B cell (primary cell): ENCODE measurements at regions of chr6 and their contacts with region 1.

Region 1: DNA sequence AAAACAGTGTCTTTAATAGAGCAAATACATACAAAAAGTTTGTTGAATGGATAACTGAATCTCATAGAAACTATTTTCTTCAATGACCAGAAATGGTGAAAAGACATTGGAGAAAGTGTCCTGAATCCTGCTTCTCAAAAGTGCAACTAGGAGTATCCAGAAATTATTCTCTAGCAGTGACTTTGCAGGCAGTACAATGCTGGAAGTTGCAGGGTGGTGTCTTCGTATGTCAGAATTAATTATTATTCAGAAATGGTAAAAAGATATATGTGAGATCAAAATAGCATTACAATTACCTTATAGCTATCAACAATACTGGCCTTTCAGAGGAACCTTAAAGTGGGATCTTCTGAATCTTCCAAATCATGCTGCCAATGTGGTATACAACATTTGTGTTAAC is 10.0 kb downstream of the FRK start:
- DNase-seq: no peak
- ATAC-seq: no peak
- H3K4me3 ChIP-seq: no peak overlapping the region
- H3K4me3 Mint-ChIP-seq: no peak overlapping the region
- H3K27ac ChIP-seq: no peak overlapping the region
- H3K27ac Mint-ChIP-seq: no peak overlapping the region
- H3K4me1 ChIP-seq: peaks cover 8 to 9% of the 10 kb centered on the region in 2 donors
- H3K4me1 Mint-ChIP-seq: peaks cover 4% of the 10 kb centered on the region
- H3K27me3 ChIP-seq: peaks cover 0 to 3% (median 0%) of the 10 kb centered on the region in 4 experiments
- H3K27me3 Mint-ChIP-seq: peaks cover 6% of the 10 kb centered on the region
- CTCF ChIP-seq: no peak

Region 2: DNA sequence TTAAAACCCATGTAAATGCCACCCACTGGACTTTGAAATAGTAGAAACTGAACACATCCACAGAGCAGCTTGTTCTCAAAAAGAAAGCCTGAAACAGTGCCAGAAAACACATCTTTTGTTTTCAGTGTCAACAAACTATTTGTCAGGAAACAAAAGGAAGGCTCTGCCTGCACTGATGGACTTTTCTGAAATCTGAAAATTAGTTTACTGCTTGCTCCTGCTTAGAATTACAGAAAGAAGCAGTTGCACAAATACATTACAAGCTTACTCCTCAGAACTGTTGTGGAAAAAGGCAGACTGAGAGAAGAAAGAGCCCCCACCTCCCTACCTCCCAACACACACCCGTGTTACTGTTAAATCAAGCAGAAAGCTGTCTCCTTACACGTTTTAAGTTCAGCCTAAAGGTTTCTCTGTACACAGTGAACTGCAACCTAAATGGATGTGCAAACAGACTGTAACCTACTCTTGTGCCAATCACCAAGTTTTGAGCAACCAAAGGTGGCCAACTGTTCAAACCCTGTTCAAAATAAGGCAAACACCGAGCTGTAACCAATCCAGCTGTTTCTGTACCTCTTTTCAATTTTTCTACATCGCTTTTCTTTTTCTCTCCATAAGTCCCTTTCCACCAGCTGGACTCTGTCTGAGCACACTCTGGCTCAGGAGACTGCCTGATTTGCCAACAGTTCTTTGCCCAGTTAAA is 33.7 kb before region 1 on chr6:
- CTCF ChIA-PET with region 1: no interaction called
- POLR2A ChIA-PET with region 1: no interaction called
- intact Hi-C with region 1: loop called (anchors 5 kb)
- DNase-seq: peak; percentile 17
- ATAC-seq: no peak
- H3K4me3 ChIP-seq: no peak overlapping the region
- H3K4me3 Mint-ChIP-seq: peak overlapping the region; percentile 32
- H3K27ac ChIP-seq: no peak overlapping the region
- H3K27ac Mint-ChIP-seq: peak overlapping the region; percentile 57
- H3K4me1 ChIP-seq: peaks cover 35 to 46% of the 10 kb centered on the region in 2 donors
- H3K4me1 Mint-ChIP-seq: peaks cover 51% of the 10 kb centered on the region
- H3K27me3 ChIP-seq: no peaks in the 10 kb centered on the region
- H3K27me3 Mint-ChIP-seq: peaks cover 3% of the 10 kb centered on the region
- CTCF ChIP-seq: no peak

Region 3: DNA sequence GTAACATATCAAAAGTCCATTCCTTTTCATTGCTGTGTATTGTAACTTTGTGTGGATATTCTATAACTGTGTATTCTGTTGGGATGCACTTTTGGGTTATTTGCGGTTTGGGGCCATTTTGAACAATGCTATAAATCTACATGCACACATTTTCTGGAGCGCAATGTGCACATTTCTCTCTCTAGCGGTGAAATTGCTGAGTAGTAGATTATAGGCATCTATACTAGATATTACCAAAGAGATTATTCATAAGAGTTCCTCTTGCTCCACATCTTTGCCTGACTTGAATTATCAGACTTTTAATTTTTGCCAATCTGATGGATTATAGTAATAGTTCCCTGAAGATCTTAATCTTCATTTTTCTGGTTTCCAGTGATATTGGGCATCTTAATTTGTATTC is 28.2 kb after region 1 on chr6:
- CTCF ChIA-PET with region 1: no interaction called
- POLR2A ChIA-PET with region 1: no interaction called
- intact Hi-C with region 1: no loop called
- DNase-seq: no peak
- ATAC-seq: no peak
- H3K4me3 ChIP-seq: no peak overlapping the region
- H3K4me3 Mint-ChIP-seq: no peak overlapping the region
- H3K27ac ChIP-seq: no peak overlapping the region
- H3K27ac Mint-ChIP-seq: no peak overlapping the region
- H3K4me1 ChIP-seq: no peaks in the 10 kb centered on the region
- H3K4me1 Mint-ChIP-seq: no peaks in the 10 kb centered on the region
- H3K27me3 ChIP-seq: peaks cover 0 to 6% (median 1%) of the 10 kb centered on the region in 4 experiments
- H3K27me3 Mint-ChIP-seq: peaks cover 16% of the 10 kb centered on the region
- CTCF ChIP-seq: no peak